Esophagus squamous epithelium (tissue), 5 donors: ENCODE measurements at regions of chr19 and their contacts with region 1.

Region 1: DNA sequence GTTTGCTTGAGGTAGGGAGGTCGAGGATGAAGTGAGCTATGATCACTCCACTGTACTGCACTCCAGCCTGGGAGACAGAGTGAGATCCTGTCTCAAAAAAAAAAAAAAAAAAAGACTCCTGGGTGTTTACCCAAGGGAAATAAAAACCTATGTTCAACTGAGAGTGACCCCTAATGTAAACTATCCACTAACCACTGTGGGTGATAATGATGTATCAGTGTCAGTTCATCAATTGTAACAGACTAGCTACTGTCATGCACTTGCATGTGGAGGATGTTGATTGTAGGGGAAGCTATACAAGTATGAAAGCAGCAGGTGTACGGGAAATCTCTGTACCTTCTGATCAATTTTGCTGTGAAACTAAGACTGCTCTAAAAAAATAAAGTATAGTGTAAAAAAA is 2.6 kb upstream of the CIB3 start:
- DNase-seq: no peak
- H3K4me3 ChIP-seq: no peak overlapping the region
- H3K27ac ChIP-seq: no peak overlapping the region
- H3K4me1 ChIP-seq: peaks cover 0 to 17% (median 0%) of the 10 kb centered on the region in 3 donors
- H3K27me3 ChIP-seq: no peaks in the 10 kb centered on the region
- CTCF ChIP-seq: no peak
- POLR2A ChIP-seq: no peak

Region 2: GRCh38 chr19:16041299-16041990 is 134.5 kb before region 1 on chr19:
- intact Hi-C with region 1: loop called (anchors 5 kb)
- DNase-seq: no peak
- H3K4me3 ChIP-seq: peak overlapping the region in 3 of 4 donors; percentile 14 to 54 (median 16)
- H3K27ac ChIP-seq: peak overlapping the region in 2 of 4 donors; percentile 34 to 69
- H3K4me1 ChIP-seq: peaks cover 0 to 14% (median 8%) of the 10 kb centered on the region in 3 donors
- H3K27me3 ChIP-seq: no peaks in the 10 kb centered on the region
- CTCF ChIP-seq: peak; percentile 92 to 99 (median 98)
- POLR2A ChIP-seq: no peak